B cell (primary cell): ENCODE measurements at regions of chr11 and their contacts with region 1.

Region 1: DNA sequence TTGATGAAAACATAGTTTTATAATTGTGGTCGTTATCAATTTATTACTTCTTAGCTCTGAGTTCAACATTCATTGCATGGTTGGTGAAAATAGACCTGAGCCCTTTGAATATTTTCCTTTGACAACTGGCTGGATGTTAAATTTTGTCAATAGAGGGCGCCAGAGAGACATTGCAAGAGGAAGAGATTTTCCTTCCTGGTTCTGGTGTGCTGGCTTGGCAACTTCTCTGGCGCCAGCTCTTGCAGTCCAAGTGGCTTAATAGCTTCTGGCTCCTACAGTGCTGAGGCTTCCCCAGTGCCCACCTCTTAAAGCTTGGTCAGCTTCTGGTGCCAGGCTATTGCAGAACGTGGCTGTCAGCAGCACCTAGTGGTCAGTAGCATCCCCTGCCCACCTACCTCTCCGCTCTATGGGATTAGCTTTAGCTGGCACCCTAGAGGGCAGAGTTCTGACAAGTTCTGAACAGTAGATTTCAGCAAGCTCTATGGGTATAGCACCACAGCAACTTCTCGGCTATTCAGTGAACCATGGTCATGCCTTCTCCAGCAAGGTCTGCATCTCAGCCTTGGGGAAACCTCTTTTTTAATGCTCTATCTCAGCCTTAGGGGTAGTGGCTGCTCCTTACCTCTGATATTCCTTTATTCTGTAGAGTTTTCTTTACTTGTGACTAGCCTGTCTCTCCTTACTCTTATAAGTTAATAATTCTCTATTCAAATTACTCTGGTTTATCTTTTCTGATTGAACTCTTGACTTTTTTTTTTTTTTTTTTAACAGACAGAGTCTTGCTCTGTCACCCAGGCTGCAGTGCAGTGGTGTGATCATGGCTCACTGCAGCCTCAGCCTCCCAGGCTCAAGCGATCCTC is 59.4 kb downstream of the ACER3 start:
- DNase-seq: peak; percentile 82
- ATAC-seq: peak; percentile 74
- H3K4me3 ChIP-seq: peak overlapping the region; percentile 2 to 62 (median 41)
- H3K4me3 Mint-ChIP-seq: peak overlapping the region; percentile 75
- H3K27ac ChIP-seq: no peak overlapping the region
- H3K27ac Mint-ChIP-seq: no peak overlapping the region
- H3K4me1 ChIP-seq: peaks cover 6 to 8% of the 10 kb centered on the region in 2 donors
- H3K4me1 Mint-ChIP-seq: peaks cover 9% of the 10 kb centered on the region
- H3K27me3 ChIP-seq: no peaks in the 10 kb centered on the region
- H3K27me3 Mint-ChIP-seq: no peaks in the 10 kb centered on the region
- CTCF ChIP-seq: peak; percentile 93

Region 2: GRCh38 chr11:76235233-76236091 is 684.7 kb before region 1 on chr11:
- CTCF ChIA-PET with region 1: no interaction called
- POLR2A ChIA-PET with region 1: no interaction called
- intact Hi-C with region 1: no loop called
- DNase-seq: peak; percentile 95
- ATAC-seq: peak; percentile 80
- H3K4me3 ChIP-seq: peak overlapping the region; percentile 84 to 97 (median 93)
- H3K4me3 Mint-ChIP-seq: peak overlapping the region; percentile 91
- H3K27ac ChIP-seq: peak overlapping the region; percentile 58 to 69
- H3K27ac Mint-ChIP-seq: peak overlapping the region; percentile 98
- H3K4me1 ChIP-seq: peaks cover 10 to 33% of the 10 kb centered on the region in 2 donors
- H3K4me1 Mint-ChIP-seq: peaks cover 29% of the 10 kb centered on the region
- H3K27me3 ChIP-seq: peaks cover 0 to 3% (median 0%) of the 10 kb centered on the region in 4 experiments
- H3K27me3 Mint-ChIP-seq: no peaks in the 10 kb centered on the region
- CTCF ChIP-seq: no peak

Region 3: GRCh38 chr11:76734456-76735420 is 185.4 kb before region 1 on chr11:
- CTCF ChIA-PET with region 1: interaction called, 17 read pairs
- POLR2A ChIA-PET with region 1: no interaction called
- intact Hi-C with region 1: loop called (anchors 10 kb)
- DNase-seq: no peak
- ATAC-seq: no peak
- H3K4me3 ChIP-seq: no peak overlapping the region
- H3K4me3 Mint-ChIP-seq: no peak overlapping the region
- H3K27ac ChIP-seq: no peak overlapping the region
- H3K27ac Mint-ChIP-seq: no peak overlapping the region
- H3K4me1 ChIP-seq: no peaks in the 10 kb centered on the region
- H3K4me1 Mint-ChIP-seq: no peaks in the 10 kb centered on the region
- H3K27me3 ChIP-seq: peaks cover 0 to under 1% (median 0%) of the 10 kb centered on the region in 4 experiments
- H3K27me3 Mint-ChIP-seq: peaks cover 23% of the 10 kb centered on the region
- CTCF ChIP-seq: no peak

Region 4: DNA sequence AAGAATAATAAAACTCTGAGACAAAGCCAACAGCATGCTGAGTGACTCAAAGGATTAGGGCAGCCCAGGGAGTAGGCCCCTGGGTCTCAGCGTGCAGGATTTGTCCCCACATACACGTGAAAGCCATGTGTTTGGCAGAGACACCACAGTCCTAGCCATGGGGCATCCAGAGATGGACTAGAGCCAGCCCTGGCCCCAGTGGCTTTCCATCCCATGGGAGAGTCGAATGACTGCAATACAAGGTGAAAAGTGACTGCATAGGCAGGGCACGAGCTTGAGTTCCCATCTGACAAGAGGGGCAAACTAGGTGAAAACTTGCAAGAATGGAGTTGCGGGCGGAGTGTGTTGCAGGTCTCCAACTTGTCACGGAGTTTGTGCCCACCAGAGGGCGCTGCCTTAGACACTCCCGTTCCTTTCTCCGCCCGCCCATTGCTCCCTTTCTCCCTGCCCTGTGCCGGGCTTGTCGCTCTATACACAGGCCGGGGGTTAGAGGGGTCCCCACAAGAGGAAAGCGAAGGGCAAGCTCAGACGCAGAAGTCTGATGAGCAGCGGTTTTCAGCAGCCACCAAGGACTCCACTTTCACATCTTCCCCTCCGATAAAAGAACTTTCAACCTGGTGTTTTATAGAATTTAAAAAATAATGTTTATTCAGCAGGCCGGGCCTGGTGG is 112.8 kb before region 1 on chr11:
- CTCF ChIA-PET with region 1: interaction called, 96 read pairs
- POLR2A ChIA-PET with region 1: interaction called, 6 read pairs
- intact Hi-C with region 1: loop called (anchors 1 kb)
- DNase-seq: peak; percentile 70
- ATAC-seq: peak; percentile 70
- H3K4me3 ChIP-seq: no peak overlapping the region
- H3K4me3 Mint-ChIP-seq: no peak overlapping the region
- H3K27ac ChIP-seq: no peak overlapping the region
- H3K27ac Mint-ChIP-seq: no peak overlapping the region
- H3K4me1 ChIP-seq: peaks cover 0 to 5% of the 10 kb centered on the region in 2 donors
- H3K4me1 Mint-ChIP-seq: no peaks in the 10 kb centered on the region
- H3K27me3 ChIP-seq: peaks cover 0 to 30% (median 9%) of the 10 kb centered on the region in 4 experiments
- H3K27me3 Mint-ChIP-seq: peaks cover 39% of the 10 kb centered on the region
- CTCF ChIP-seq: peak; percentile 85

Region 5: GRCh38 chr11:76872959-76873827 is 46.9 kb before region 1 on chr11:
- CTCF ChIA-PET with region 1: interaction called, 14 read pairs
- POLR2A ChIA-PET with region 1: no interaction called
- intact Hi-C with region 1: no loop called
- DNase-seq: no peak
- ATAC-seq: no peak
- H3K4me3 ChIP-seq: no peak overlapping the region
- H3K4me3 Mint-ChIP-seq: no peak overlapping the region
- H3K27ac ChIP-seq: no peak overlapping the region
- H3K27ac Mint-ChIP-seq: no peak overlapping the region
- H3K4me1 ChIP-seq: peaks cover 9% of the 10 kb centered on the region in 2 donors
- H3K4me1 Mint-ChIP-seq: peaks cover 12% of the 10 kb centered on the region
- H3K27me3 ChIP-seq: no peaks in the 10 kb centered on the region
- H3K27me3 Mint-ChIP-seq: no peaks in the 10 kb centered on the region
- CTCF ChIP-seq: no peak

Region 6: DNA sequence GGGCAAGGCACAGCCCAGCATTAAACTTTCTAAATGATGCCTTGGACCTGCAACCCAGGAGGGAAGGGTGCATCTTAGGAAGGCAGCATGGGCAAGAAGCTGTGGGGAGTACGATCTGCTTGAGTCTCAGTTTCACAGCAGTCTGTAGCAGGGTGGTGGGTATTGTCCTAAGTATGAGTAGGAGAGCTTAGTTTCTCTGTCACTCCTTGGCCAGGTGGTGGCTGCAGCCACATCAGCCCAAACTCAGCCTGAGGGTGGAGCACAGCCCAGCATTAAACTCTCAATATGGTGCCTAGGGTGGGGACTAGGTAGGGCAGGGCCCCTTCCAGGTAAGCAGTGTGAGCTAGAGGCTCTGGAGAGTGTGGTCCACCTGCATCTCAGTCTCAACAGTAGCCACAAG is 26.1 kb after region 1 on chr11:
- CTCF ChIA-PET with region 1: interaction called, 14 read pairs
- POLR2A ChIA-PET with region 1: no interaction called
- intact Hi-C with region 1: no loop called
- DNase-seq: no peak
- ATAC-seq: no peak
- H3K4me3 ChIP-seq: no peak overlapping the region
- H3K4me3 Mint-ChIP-seq: no peak overlapping the region
- H3K27ac ChIP-seq: no peak overlapping the region
- H3K27ac Mint-ChIP-seq: no peak overlapping the region
- H3K4me1 ChIP-seq: no peaks in the 10 kb centered on the region
- H3K4me1 Mint-ChIP-seq: no peaks in the 10 kb centered on the region
- H3K27me3 ChIP-seq: no peaks in the 10 kb centered on the region
- H3K27me3 Mint-ChIP-seq: no peaks in the 10 kb centered on the region
- CTCF ChIP-seq: no peak

Region 7: GRCh38 chr11:76974179-76974891 is 54.2 kb after region 1 on chr11:
- CTCF ChIA-PET with region 1: no interaction called
- POLR2A ChIA-PET with region 1: no interaction called
- intact Hi-C with region 1: no loop called
- DNase-seq: no peak
- ATAC-seq: no peak
- H3K4me3 ChIP-seq: no peak overlapping the region
- H3K4me3 Mint-ChIP-seq: no peak overlapping the region
- H3K27ac ChIP-seq: no peak overlapping the region
- H3K27ac Mint-ChIP-seq: no peak overlapping the region
- H3K4me1 ChIP-seq: no peaks in the 10 kb centered on the region
- H3K4me1 Mint-ChIP-seq: no peaks in the 10 kb centered on the region
- H3K27me3 ChIP-seq: no peaks in the 10 kb centered on the region
- H3K27me3 Mint-ChIP-seq: no peaks in the 10 kb centered on the region
- CTCF ChIP-seq: no peak